ENCODE measurements at regions of chr17 and their contacts with region 1.

Region 1: DNA sequence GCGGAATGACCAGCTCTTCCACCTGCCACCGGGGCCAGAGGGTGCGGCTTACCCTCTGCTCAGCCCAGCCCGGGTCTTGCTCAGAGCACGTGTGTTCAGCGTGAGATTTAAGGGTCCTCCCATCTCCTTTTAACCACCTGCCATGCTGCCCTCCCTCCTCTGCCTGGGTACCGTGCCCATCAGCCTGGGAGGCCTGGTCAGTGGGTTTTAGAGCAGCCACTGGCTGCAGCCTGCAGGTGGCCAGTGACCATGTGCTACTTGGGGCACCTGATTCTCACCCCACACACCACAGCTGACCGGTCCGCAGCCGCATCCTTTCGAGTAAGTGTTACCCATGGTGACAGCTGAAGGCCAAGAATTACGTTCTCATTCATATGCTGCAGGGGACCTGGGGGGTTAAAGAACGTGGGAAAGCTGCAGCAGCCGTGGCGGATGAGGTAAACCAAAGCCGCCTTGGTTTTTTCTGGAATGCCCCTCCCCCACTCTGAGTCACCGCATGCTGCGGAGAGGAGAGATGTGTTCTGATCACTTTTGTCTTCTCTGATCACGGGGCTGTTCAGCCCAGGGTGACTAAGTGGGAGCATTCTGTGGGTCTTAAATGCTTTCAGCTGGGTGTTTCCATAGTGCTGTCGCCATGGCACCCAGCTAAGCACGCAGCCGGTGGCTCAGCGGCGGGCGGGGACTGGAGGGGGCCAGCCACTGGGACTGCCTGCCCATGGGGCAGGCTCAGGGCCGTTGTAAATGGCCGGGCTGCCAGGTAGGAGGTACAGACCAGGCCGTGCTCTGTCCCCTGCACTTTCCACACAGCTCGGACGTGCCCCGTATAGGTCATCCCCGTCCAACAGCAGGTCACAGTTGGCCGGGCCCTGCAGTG is 59.8 kb downstream of the BAIAP2 start:
- ATAC-seq: peak; percentile 71 to 87 (median 80)
- H3K4me3 ChIP-seq: peak overlapping the region in 1 of 5 donors; percentile 5
- H3K27ac ChIP-seq: peak overlapping the region; percentile 88 to 90
- H3K4me1 ChIP-seq: peaks cover 60 to 79% of the 10 kb centered on the region in 2 donors

Region 2: GRCh38 chr17:80389011-80389995 is 705.4 kb before region 1 on chr17:
- in situ Hi-C with region 1: no loop called
- ATAC-seq: peak in 1 of 8 experiments; percentile 66
- H3K4me3 ChIP-seq: no peak overlapping the region
- H3K27ac ChIP-seq: no peak overlapping the region
- H3K4me1 ChIP-seq: peaks cover 0 to 2% of the 10 kb centered on the region in 2 donors

Region 3: DNA sequence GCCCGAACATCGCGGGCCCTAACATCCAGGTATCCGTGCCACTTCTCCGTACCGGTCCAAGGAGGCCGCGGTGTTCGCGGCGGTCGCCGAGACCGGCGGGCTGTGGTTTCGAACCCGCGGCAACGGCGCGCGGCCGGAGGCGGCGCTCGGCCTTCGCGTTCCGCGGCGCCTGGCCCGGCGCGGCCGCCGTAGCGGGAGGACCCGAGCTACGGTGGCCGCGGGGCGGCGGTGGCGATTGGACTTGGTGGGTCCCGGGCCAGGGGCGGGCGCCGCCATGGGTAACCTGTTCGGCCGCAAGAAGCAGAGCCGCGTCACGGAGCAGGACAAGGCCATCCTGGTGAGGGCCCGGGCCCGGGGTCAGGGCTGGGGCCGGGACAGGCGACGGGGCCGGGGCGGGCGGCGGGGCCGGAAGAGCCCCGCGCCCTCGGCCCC is 103.1 kb before region 1 on chr17 and contains the start of gene CHMP6:
- in situ Hi-C with region 1: loop called in 3 of 9 experiments (anchors 10 to 25 kb)
- ATAC-seq: peak; percentile 62 to 71 (median 66)
- H3K4me3 ChIP-seq: peak within 1 kb of the TSS; percentile 84 to 97 (median 95)
- H3K27ac ChIP-seq: peak within 1 kb of the TSS in 1 of 2 donors; percentile 41
- H3K4me1 ChIP-seq: peaks cover 18 to 26% of the 10 kb centered on the region in 2 donors
- total RNA-seq, gene CHMP6: 13.1 to 27.2 (median 21.7) TPM

Measured in motor neuron (in vitro differentiated cells).